GM12878 (cell line): ENCODE measurements at regions of chr4 and their contacts with region 1.

Region 1: GRCh38 chr4:170497112-170497511 is 407.4 kb upstream of the AADAT start:
- DNase-seq: peak; percentile 24
- ATAC-seq: peak; percentile 94
- H3K4me3 ChIP-seq: peak overlapping the region; percentile 57
- H3K27ac ChIP-seq: no peak overlapping the region
- H3K4me1 ChIP-seq: no peaks in the 10 kb centered on the region
- H3K27me3 ChIP-seq: no peaks in the 10 kb centered on the region
- CTCF ChIP-seq: peak in 1 of 3 experiments; percentile 67; a peak in 2 of 6 replicates
- EP300 ChIP-seq: no peak
- POLR2A ChIP-seq: no peak
- RAD21 ChIP-seq: peak; percentile 28; the same call in 1 of the 2 replicates

Region 2: GRCh38 chr4:170138580-170139194 is 358.4 kb before region 1 on chr4:
- CTCF ChIA-PET with region 1: interaction called, 5 read pairs
- POLR2A ChIA-PET with region 1: no interaction called
- RAD21 ChIA-PET with region 1: no interaction called
- SMC1A ChIA-PET with region 1: interaction called, 3 read pairs
- in situ Hi-C with region 1: no loop called
- intact Hi-C with region 1: loop called (anchors 2 kb)
- DNase-seq: peak; percentile 27
- ATAC-seq: peak; percentile 98
- H3K4me3 ChIP-seq: no peak overlapping the region
- H3K27ac ChIP-seq: no peak overlapping the region
- H3K4me1 ChIP-seq: no peaks in the 10 kb centered on the region
- H3K27me3 ChIP-seq: no peaks in the 10 kb centered on the region; a peak in 1 of 4 replicates
- CTCF ChIP-seq: peak; percentile 74 to 94 (median 79)
- EP300 ChIP-seq: no peak
- POLR2A ChIP-seq: no peak
- RAD21 ChIP-seq: peak; percentile 86

Region 3: DNA sequence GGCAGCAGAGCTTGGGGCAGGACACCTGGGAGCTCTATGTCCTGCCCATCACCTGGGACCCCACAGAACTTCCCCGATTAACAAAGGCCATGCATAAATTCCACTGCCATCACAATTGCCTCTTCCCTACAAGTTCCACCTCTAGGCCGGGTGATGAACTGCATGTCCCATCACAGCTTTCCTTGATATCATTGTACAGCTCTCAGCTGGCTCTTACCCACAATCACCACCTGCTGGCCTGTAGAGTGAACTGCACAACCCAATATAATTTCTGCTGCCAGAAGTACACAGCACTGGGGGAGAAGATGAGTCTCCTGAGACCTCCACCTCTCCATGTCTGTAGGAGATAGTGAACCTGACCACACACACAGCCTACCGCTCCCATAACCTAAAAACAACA is 122.3 kb before region 1 on chr4:
- CTCF ChIA-PET with region 1: interaction called, 26 read pairs
- POLR2A ChIA-PET with region 1: no interaction called
- RAD21 ChIA-PET with region 1: interaction called, 12 read pairs
- SMC1A ChIA-PET with region 1: interaction called, 6 read pairs
- in situ Hi-C with region 1: no loop called
- intact Hi-C with region 1: no loop called
- DNase-seq: no peak
- ATAC-seq: peak; percentile 98
- H3K4me3 ChIP-seq: no peak overlapping the region
- H3K27ac ChIP-seq: no peak overlapping the region
- H3K4me1 ChIP-seq: no peaks in the 10 kb centered on the region
- H3K27me3 ChIP-seq: no peaks in the 10 kb centered on the region
- CTCF ChIP-seq: peak; percentile 57 to 84 (median 71)
- EP300 ChIP-seq: no peak
- POLR2A ChIP-seq: no peak
- RAD21 ChIP-seq: peak; percentile 84

Region 4: DNA sequence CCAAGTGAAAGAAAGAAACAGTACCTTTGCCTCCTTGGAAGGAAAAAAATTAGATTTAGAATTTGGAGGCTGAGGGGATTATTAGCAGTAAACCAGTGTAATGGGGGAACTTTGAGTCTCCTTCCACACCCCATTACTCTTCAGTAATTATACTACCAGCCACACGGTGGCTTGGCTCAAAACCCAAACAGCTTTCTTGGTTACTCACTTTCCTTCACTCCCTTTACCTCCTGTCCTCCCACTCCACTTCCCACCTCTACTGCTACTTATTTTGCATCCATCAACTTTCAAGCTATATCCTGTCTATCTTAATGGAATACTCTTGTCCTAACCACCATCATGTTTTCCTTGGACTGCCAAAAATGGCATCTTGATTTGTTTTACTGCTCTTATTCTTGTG is 96.8 kb before region 1 on chr4:
- CTCF ChIA-PET with region 1: interaction called, 14 read pairs
- POLR2A ChIA-PET with region 1: no interaction called
- RAD21 ChIA-PET with region 1: interaction called, 3 read pairs
- SMC1A ChIA-PET with region 1: interaction called, 4 read pairs
- in situ Hi-C with region 1: no loop called
- intact Hi-C with region 1: no loop called
- DNase-seq: no peak
- ATAC-seq: peak; percentile 87
- H3K4me3 ChIP-seq: no peak overlapping the region
- H3K27ac ChIP-seq: no peak overlapping the region
- H3K4me1 ChIP-seq: no peaks in the 10 kb centered on the region
- H3K27me3 ChIP-seq: no peaks in the 10 kb centered on the region
- CTCF ChIP-seq: peak in 1 of 3 experiments; percentile 1; a peak in 2 of 6 replicates
- EP300 ChIP-seq: no peak
- POLR2A ChIP-seq: no peak
- RAD21 ChIP-seq: no peak

Region 5: GRCh38 chr4:170446782-170447181 is 50.3 kb before region 1 on chr4:
- CTCF ChIA-PET with region 1: no interaction called
- POLR2A ChIA-PET with region 1: no interaction called
- RAD21 ChIA-PET with region 1: no interaction called
- SMC1A ChIA-PET with region 1: no interaction called
- in situ Hi-C with region 1: no loop called
- intact Hi-C with region 1: no loop called
- DNase-seq: no peak
- ATAC-seq: peak; percentile 49; the same call in 2 of the 3 replicates
- H3K4me3 ChIP-seq: no peak overlapping the region
- H3K27ac ChIP-seq: no peak overlapping the region
- H3K4me1 ChIP-seq: no peaks in the 10 kb centered on the region
- H3K27me3 ChIP-seq: no peaks in the 10 kb centered on the region; a peak in 1 of 4 replicates
- CTCF ChIP-seq: no peak
- EP300 ChIP-seq: no peak
- POLR2A ChIP-seq: no peak
- RAD21 ChIP-seq: no peak

Region 6: GRCh38 chr4:170716868-170717267 is 219.8 kb after region 1 on chr4:
- CTCF ChIA-PET with region 1: interaction called, 3 read pairs
- POLR2A ChIA-PET with region 1: no interaction called
- RAD21 ChIA-PET with region 1: no interaction called
- SMC1A ChIA-PET with region 1: interaction called, 11 read pairs
- in situ Hi-C with region 1: no loop called
- intact Hi-C with region 1: no loop called
- DNase-seq: no peak
- ATAC-seq: 0 out of 3 replicates have a peak, but pooled peaks have one; percentile 32
- H3K4me3 ChIP-seq: no peak overlapping the region
- H3K27ac ChIP-seq: no peak overlapping the region
- H3K4me1 ChIP-seq: no peaks in the 10 kb centered on the region
- H3K27me3 ChIP-seq: no peaks in the 10 kb centered on the region
- CTCF ChIP-seq: peak in 2 of 3 experiments; percentile 24 to 36; a peak in 2 of 6 replicates
- EP300 ChIP-seq: no peak
- POLR2A ChIP-seq: no peak
- RAD21 ChIP-seq: peak; percentile 63